ENCODE measurements at regions of chr3 and their contacts with region 1.

Region 1: GRCh38 chr3:109685084-109686079 is 348.0 kb upstream of the DPPA4 start:
- DNase-seq: peak; percentile 93 to 94
- ATAC-seq: peak; percentile 92
- H3K4me3 ChIP-seq: no peak overlapping the region
- H3K27ac ChIP-seq: peak overlapping the region; percentile 59 to 92
- H3K4me1 ChIP-seq: no peaks in the 10 kb centered on the region
- H3K27me3 ChIP-seq: no peaks in the 10 kb centered on the region

Region 2: GRCh38 chr3:109553591-109554371 is 131.6 kb before region 1 on chr3:
- intact Hi-C with region 1: loop called in 1 of 2 experiments (anchors 10 kb)
- DNase-seq: no peak
- ATAC-seq: no peak
- H3K4me3 ChIP-seq: no peak overlapping the region
- H3K27ac ChIP-seq: peak overlapping the region; percentile 57 to 80
- H3K4me1 ChIP-seq: peaks cover 0 to 7% of the 10 kb centered on the region in 2 donors
- H3K27me3 ChIP-seq: no peaks in the 10 kb centered on the region

Region 3: GRCh38 chr3:109853077-109853731 is 167.8 kb after region 1 on chr3:
- intact Hi-C with region 1: no loop called
- DNase-seq: no peak
- ATAC-seq: no peak
- H3K4me3 ChIP-seq: no peak overlapping the region
- H3K27ac ChIP-seq: no peak overlapping the region
- H3K4me1 ChIP-seq: no peaks in the 10 kb centered on the region
- H3K27me3 ChIP-seq: no peaks in the 10 kb centered on the region

Region 4: DNA sequence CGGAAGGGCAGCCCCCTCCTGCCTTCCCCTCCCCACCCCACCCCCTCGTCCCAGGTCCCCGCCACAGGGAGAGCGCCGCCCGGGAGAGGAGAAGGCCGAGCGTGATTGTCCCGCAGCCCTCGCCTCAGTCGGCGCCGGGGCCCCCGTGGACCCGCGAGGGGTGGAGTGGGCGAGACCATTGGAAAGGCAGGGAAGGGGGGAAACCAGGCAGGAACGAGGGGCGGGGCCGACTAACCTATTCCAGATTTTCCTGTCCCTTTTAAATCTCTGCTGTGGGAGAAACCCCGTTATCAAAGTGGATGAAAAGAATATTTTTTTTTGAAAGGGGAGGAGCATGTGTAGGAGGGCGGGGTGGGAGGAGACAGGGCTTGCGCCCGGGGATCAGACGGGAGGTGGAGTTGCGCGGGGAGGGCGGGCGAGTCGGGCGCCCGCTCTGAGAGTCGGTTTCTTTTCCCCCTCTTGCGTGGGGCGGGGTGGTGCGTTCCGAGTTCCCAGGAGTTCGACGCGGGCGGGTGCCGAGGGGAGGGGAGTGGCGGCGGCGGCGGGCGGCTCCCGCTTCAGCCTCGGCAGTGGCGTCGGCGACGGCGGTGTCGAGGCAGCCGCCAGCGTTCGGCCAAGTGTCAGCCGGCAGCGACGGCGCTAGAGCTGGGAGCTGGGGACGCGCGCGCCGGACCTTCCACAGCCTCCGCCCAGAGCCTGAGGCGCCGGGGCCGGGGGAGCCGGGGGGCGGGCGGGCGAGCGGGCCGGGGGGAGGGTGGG is 1386.1 kb after region 1 on chr3 and contains the start of gene NECTIN3:
- intact Hi-C with region 1: loop called in 1 of 2 experiments (anchors 10 kb)
- DNase-seq: peak; percentile 96 to 98
- ATAC-seq: peak; percentile 97
- H3K4me3 ChIP-seq: peak within 1 kb of the TSS; percentile 83 to 93
- H3K27ac ChIP-seq: peak within 1 kb of the TSS; percentile 72 to 92
- H3K4me1 ChIP-seq: peaks cover 2 to 3% of the 10 kb centered on the region in 2 donors
- H3K27me3 ChIP-seq: no peaks in the 10 kb centered on the region
- total RNA-seq, gene NECTIN3: 30.1 to 32.2 TPM

Measured in aorta (tissue), 5 donors.